ENCODE measurements at regions of chr6 and their contacts with region 1.

Region 1: DNA sequence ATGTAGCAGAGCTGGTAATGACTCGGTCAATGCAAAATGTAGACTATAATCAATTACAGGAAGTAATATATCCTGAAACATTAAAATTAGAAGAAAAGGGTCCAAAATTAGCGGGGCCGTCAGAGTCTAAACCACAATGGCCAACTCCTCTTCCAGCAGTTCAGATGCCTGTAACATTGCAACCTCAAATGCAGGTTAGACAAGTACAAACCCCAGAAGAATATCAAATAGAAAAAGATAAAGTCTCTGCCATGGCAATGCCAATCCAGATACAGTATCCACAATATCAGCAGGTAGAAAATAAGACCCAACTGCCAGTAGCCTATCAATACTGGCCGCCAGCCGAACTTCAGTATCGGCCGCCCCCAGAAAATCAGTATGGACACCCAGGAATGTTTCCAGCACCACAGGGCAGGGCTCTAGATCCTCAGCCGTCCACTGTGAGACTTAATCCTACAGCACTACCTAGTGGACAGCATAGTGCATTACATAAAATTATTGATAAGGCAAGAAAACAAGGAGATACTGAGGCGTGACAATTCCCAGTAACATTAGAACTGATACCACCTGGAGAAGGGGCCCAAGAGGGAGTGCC is 158.4 kb downstream of the GPX5 start:
- H3K4me3 ChIP-seq: no peak overlapping the region; the same call in 1 of the 2 replicates
- H3K27ac ChIP-seq: no peak overlapping the region
- H3K4me1 ChIP-seq: no peaks in the 10 kb centered on the region
- CTCF ChIP-seq: peak; percentile 59

Region 2: GRCh38 chr6:28393911-28394662 is 290.0 kb before region 1 on chr6:
- CTCF ChIA-PET with region 1: interaction called, 10 read pairs
- POLR2A ChIA-PET with region 1: no interaction called
- H3K4me3 ChIP-seq: no peak overlapping the region
- H3K27ac ChIP-seq: no peak overlapping the region
- H3K4me1 ChIP-seq: 0 out of 2 replicates have a peak, but pooled peaks cover 4% of the 10 kb centered on the region
- CTCF ChIP-seq: no peak

Region 3: DNA sequence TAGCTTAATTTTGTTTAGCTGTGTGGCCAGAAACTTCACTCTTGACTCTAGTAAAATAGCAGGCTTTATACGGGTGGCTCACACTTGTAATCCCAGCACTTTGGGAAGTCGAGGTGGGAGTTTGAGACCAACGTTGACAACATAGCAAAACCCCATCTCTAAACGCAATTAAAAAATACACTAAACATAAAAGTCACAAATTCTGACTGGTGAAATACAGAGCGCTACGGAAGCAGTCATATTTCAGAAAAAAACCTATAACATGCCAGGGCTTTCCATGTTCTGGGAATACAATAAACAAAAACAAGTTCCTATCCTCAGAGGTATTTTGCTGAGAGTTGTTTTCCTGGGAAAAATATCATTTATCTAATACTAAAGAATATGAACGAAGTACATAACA is 216.0 kb before region 1 on chr6:
- CTCF ChIA-PET with region 1: no interaction called
- POLR2A ChIA-PET with region 1: no interaction called
- H3K4me3 ChIP-seq: no peak overlapping the region
- H3K27ac ChIP-seq: no peak overlapping the region
- H3K4me1 ChIP-seq: no peaks in the 10 kb centered on the region
- CTCF ChIP-seq: no peak

Region 4: GRCh38 chr6:28496099-28496779 is 187.8 kb before region 1 on chr6:
- CTCF ChIA-PET with region 1: interaction called, 21 read pairs
- POLR2A ChIA-PET with region 1: no interaction called
- H3K4me3 ChIP-seq: no peak overlapping the region
- H3K27ac ChIP-seq: no peak overlapping the region
- H3K4me1 ChIP-seq: no peaks in the 10 kb centered on the region
- CTCF ChIP-seq: no peak

Region 5: GRCh38 chr6:28794175-28795002 is 110.3 kb after region 1 on chr6:
- CTCF ChIA-PET with region 1: no interaction called
- POLR2A ChIA-PET with region 1: no interaction called
- H3K4me3 ChIP-seq: peak overlapping the region; percentile 39
- H3K27ac ChIP-seq: no peak overlapping the region
- H3K4me1 ChIP-seq: 0 out of 2 replicates have a peak, but pooled peaks cover 4% of the 10 kb centered on the region
- CTCF ChIP-seq: peak; percentile 6; the same call in 1 of the 2 replicates

Measured in HEK293 (cell line).